Kidney (tissue), 22 donors: ENCODE measurements at regions of chr7 and their contacts with region 1.

Region 1: DNA sequence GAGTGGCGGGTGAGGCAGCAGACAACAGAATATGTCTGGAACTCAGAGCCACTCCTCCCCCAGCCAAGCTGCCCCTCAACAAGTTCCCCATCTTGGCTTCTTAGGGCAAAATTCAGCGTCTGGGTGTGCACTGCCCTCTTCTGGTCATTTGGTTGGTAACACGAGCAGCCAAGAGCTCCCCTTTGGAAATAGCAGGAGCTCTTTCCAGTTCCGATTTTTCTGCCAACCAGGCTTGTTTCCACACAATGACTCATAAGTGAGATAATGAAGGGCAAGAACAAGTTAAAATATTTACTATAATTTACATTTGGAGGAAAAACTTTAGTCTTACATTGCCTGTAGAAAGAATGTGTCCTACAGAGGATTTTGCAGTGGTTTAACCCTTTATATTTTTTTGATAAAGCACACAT is 70.5 kb downstream of the ADCYAP1R1 start:
- DNase-seq: peak in 4 of 5 donors; percentile 67 to 85 (median 74)
- H3K4me3 ChIP-seq: no peak overlapping the region
- H3K27ac ChIP-seq: no peak overlapping the region
- H3K4me1 ChIP-seq: no peaks in the 10 kb centered on the region
- H3K27me3 ChIP-seq: no peaks in the 10 kb centered on the region
- CTCF ChIP-seq: peak; percentile 70

Region 2: DNA sequence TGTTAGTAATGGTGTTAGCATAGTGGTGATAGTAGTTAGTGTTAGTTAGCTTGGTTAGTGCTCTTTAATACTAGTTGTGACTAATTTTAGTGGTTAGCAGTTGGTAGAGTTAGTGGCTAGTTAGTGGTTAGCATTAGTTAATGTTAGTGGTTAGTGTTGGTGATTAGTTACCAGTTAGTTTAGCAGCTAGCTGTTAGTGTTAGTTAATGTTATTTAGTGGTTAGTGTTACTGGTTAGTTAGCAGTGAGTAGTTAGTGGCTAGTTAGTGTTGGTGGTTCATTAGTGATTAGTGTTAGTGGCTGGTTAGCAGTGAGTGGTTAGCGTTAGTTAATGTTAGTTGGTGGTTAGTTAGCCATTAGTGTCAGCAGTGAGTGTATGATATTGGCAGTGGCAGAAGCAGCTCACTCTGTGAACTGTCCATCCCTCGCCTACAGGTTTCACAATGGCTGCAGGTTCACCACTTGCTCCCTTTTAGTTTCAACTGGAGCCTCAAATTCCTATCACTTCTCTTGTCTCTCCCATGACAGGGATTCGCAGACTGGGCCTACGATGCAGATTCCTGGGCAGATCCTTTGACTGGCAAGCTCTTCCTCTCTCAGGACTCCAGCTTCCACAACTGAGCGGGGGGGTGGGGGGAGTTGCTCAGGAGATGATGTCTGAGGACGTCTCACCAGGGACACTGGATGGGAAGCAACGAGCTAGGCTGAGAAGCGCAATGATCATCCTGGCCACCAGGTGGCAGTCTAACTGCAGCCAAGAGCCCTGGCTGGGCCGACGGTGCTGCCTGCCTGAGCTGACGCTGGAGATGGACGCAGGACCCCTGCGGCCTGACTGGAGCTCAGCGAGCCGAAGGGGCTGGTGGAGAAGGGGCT is 139.4 kb before region 1 on chr7:
- intact Hi-C with region 1: loop called (anchors 5 kb)
- DNase-seq: peak; percentile 87 to 92 (median 90)
- H3K4me3 ChIP-seq: no peak overlapping the region
- H3K27ac ChIP-seq: no peak overlapping the region
- H3K4me1 ChIP-seq: no peaks in the 10 kb centered on the region
- H3K27me3 ChIP-seq: no peaks in the 10 kb centered on the region
- CTCF ChIP-seq: peak; percentile 97